ENCODE measurements at regions of chr1 and their contacts with region 1.

Region 1: DNA sequence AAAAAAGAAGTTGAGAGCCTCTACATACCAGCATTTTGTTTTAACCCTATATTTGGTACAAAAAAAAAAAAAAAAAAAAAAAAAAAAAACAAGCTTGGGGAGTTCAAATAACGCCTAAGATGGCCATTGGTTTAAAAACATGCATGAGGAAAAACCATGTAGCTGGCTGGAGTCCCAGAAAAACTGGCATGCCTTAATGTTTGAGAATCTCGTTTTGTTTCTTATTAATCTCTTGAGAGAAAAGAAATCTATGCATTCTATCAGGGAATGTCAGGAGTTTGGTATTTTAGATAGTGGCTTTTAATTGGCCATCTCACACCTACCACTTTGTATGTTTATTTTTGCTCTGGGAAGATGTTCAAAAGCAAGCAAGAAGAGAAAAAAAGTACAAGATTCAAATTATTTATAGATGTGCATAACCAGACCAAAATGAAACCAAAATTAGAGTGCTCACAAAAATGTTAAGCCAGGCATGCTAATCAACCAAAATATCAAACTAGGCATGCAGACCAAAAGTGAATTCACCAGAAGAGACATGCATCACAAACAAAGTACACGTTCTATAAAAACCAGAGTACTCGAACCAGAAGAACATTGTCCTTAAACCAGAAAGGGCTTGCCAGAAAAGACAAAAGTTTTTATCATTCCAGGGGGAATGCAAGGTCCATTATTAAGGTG is 156.6 kb downstream of the AK5 start:
- DNase-seq: no peak
- ATAC-seq: no peak
- H3K4me3 ChIP-seq: peak overlapping the region in 1 of 2 experiments; percentile 8
- H3K4me3 Mint-ChIP-seq: peak overlapping the region; percentile 52
- H3K27ac ChIP-seq: no peak overlapping the region
- H3K27ac Mint-ChIP-seq: peak overlapping the region; percentile 76
- H3K4me1 ChIP-seq: peaks cover 33% of the 10 kb centered on the region
- H3K4me1 Mint-ChIP-seq: peaks cover 32% of the 10 kb centered on the region
- H3K27me3 ChIP-seq: no peaks in the 10 kb centered on the region
- H3K27me3 Mint-ChIP-seq: no peaks in the 10 kb centered on the region
- CTCF ChIP-seq: no peak

Region 2: GRCh38 chr1:77504986-77505385 is 66.6 kb after region 1 on chr1:
- CTCF ChIA-PET with region 1: no interaction called
- POLR2A ChIA-PET with region 1: no interaction called
- intact Hi-C with region 1: no loop called
- DNase-seq: no peak
- ATAC-seq: no peak
- H3K4me3 ChIP-seq: no peak overlapping the region
- H3K4me3 Mint-ChIP-seq: no peak overlapping the region
- H3K27ac ChIP-seq: no peak overlapping the region
- H3K27ac Mint-ChIP-seq: peak overlapping the region; percentile 1
- H3K4me1 ChIP-seq: no peaks in the 10 kb centered on the region
- H3K4me1 Mint-ChIP-seq: peaks cover 7% of the 10 kb centered on the region
- H3K27me3 ChIP-seq: no peaks in the 10 kb centered on the region
- H3K27me3 Mint-ChIP-seq: no peaks in the 10 kb centered on the region
- CTCF ChIP-seq: no peak

Region 3: DNA sequence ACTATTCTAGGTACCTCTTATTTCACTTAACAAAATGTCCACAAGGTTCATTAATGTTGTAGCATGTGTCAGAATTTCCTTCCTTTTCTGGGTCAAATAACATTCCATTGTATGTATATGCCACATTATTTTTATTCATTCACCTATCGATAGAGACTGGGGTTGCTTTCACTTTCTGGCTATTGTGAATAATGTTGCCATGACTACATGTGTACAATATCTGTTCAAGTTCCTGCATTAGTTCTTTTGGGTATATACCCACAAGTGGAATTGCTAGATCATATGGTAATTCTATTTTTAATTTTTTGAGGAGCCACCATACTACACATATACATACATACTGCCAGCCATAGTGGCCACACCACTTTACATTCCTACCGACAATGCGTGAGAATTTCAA is 85.7 kb after region 1 on chr1:
- CTCF ChIA-PET with region 1: no interaction called
- POLR2A ChIA-PET with region 1: no interaction called
- intact Hi-C with region 1: loop called in 1 of 2 experiments (anchors 10 kb)
- DNase-seq: no peak
- ATAC-seq: no peak
- H3K4me3 ChIP-seq: no peak overlapping the region
- H3K4me3 Mint-ChIP-seq: no peak overlapping the region
- H3K27ac ChIP-seq: no peak overlapping the region
- H3K27ac Mint-ChIP-seq: peak overlapping the region; percentile 19
- H3K4me1 ChIP-seq: no peaks in the 10 kb centered on the region
- H3K4me1 Mint-ChIP-seq: peaks cover 9% of the 10 kb centered on the region
- H3K27me3 ChIP-seq: no peaks in the 10 kb centered on the region
- H3K27me3 Mint-ChIP-seq: no peaks in the 10 kb centered on the region
- CTCF ChIP-seq: no peak

Measured in CD8-positive, alpha-beta T cell (primary cell).